Activated T-helper 1 cell treated with anti-CD3 and anti-CD28 coated beads, Interleukin-12 subunit alpha, Interleukin-12 subunit beta, Interleukin-2, Interleukin-4 antibody, amounts not matched to agents 30 ng/mL and 10 ng/mL and 1 ng/mL, durations not matched to agents 14 hours and 24 hours and 36 hours (primary cell): ENCODE measurements at regions of chr6 and their contacts with region 1.

Region 1: DNA sequence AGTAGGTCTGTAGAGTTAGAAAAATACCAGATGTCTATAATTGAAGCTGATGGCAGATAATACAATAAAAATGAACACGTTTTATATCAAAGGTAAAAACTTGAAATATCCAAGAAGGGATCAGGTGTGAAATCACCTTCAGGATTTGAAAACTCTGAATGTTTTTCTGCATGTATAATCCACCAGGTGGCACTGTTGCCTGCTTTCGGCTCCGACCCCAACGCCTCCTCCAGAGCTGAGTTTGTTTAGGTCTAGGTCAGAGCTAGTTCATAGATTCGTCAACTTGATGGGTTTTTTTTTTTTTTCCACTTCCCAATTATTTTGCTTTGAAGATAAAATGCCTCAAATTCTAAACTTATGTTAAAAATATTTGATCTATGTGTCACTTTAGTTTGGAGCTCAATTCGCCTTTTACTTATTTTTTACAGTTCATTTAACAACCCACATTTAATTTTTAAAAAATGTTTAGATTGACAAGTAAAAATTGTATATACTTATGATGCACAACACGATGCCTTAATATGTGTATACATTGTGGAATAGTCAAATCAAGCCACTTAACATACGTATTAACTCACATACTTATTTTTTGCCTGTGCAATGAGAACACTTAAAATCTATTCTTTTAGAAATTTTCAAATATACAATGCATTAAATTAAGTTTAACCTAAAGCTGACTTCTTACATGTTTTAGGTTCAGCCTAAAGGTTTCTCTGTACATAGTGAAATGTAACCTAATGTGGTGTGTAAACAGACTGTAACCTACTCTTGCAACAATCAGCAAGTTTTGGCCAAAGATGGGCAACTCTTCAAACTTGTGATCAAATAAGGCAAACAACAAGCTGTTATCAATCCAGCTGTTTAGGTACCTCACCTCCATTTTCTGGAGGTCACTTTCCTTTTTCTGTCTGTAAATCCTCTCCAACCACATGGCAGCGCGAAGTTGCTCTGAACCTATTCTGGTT is 39.4 kb upstream of the ENPP4 start:
- DNase-seq: peak; percentile 19
- H3K4me3 Mint-ChIP-seq: no peak overlapping the region
- H3K27ac Mint-ChIP-seq: no peak overlapping the region
- H3K4me1 Mint-ChIP-seq: no peaks in the 10 kb centered on the region
- H3K27me3 Mint-ChIP-seq: peaks cover 19% of the 10 kb centered on the region

Region 2: GRCh38 chr6:44234101-44235025 is 1856.0 kb before region 1 on chr6:
- intact Hi-C with region 1: no loop called
- DNase-seq: no peak
- H3K4me3 Mint-ChIP-seq: no peak overlapping the region
- H3K27ac Mint-ChIP-seq: peak overlapping the region; percentile 53
- H3K4me1 Mint-ChIP-seq: peaks cover 13% of the 10 kb centered on the region
- H3K27me3 Mint-ChIP-seq: no peaks in the 10 kb centered on the region

Region 3: GRCh38 chr6:45930420-45931040 is 159.9 kb before region 1 on chr6:
- intact Hi-C with region 1: loop called (anchors 2 kb)
- DNase-seq: peak; percentile 31
- H3K4me3 Mint-ChIP-seq: no peak overlapping the region
- H3K27ac Mint-ChIP-seq: no peak overlapping the region
- H3K4me1 Mint-ChIP-seq: peaks cover 10% of the 10 kb centered on the region
- H3K27me3 Mint-ChIP-seq: peaks cover 2% of the 10 kb centered on the region

Region 4: GRCh38 chr6:46129629-46130511 is 39.5 kb after region 1 on chr6 and contains the start of gene ENPP4:
- intact Hi-C with region 1: loop called (anchors 1 kb)
- DNase-seq: peak; percentile 92
- H3K4me3 Mint-ChIP-seq: peak within 1 kb of the TSS; percentile 91
- H3K27ac Mint-ChIP-seq: peak within 1 kb of the TSS; percentile 75
- H3K4me1 Mint-ChIP-seq: peaks cover 25% of the 10 kb centered on the region
- H3K27me3 Mint-ChIP-seq: peaks cover 2% of the 10 kb centered on the region
- total RNA-seq, gene ENPP4: 5.9 and 6.1 TPM in 2 replicates

Region 5: GRCh38 chr6:46221222-46221793 is 130.9 kb after region 1 on chr6:
- intact Hi-C with region 1: loop called (anchors 1 kb)
- DNase-seq: no peak
- H3K4me3 Mint-ChIP-seq: no peak overlapping the region
- H3K27ac Mint-ChIP-seq: no peak overlapping the region
- H3K4me1 Mint-ChIP-seq: peaks cover 11% of the 10 kb centered on the region
- H3K27me3 Mint-ChIP-seq: peaks cover 6% of the 10 kb centered on the region

Region 6: GRCh38 chr6:46781478-46782378 is 691.3 kb after region 1 on chr6:
- intact Hi-C with region 1: loop called (anchors 2 kb)
- DNase-seq: no peak
- H3K4me3 Mint-ChIP-seq: no peak overlapping the region
- H3K27ac Mint-ChIP-seq: no peak overlapping the region
- H3K4me1 Mint-ChIP-seq: no peaks in the 10 kb centered on the region
- H3K27me3 Mint-ChIP-seq: peaks cover 2% of the 10 kb centered on the region